Calu3 (cell line): ENCODE measurements at regions of chr20 and their contacts with region 1.

Region 1: GRCh38 chr20:44080646-44081267 is 106.2 kb downstream of the JPH2 start:
- DNase-seq: peak; percentile 86
- H3K4me3 Mint-ChIP-seq: no peak overlapping the region
- H3K27ac Mint-ChIP-seq: no peak overlapping the region
- H3K4me1 Mint-ChIP-seq: peaks cover 7% of the 10 kb centered on the region
- H3K27me3 Mint-ChIP-seq: peaks cover 41% of the 10 kb centered on the region
- CTCF ChIP-seq: peak; percentile 98

Region 2: DNA sequence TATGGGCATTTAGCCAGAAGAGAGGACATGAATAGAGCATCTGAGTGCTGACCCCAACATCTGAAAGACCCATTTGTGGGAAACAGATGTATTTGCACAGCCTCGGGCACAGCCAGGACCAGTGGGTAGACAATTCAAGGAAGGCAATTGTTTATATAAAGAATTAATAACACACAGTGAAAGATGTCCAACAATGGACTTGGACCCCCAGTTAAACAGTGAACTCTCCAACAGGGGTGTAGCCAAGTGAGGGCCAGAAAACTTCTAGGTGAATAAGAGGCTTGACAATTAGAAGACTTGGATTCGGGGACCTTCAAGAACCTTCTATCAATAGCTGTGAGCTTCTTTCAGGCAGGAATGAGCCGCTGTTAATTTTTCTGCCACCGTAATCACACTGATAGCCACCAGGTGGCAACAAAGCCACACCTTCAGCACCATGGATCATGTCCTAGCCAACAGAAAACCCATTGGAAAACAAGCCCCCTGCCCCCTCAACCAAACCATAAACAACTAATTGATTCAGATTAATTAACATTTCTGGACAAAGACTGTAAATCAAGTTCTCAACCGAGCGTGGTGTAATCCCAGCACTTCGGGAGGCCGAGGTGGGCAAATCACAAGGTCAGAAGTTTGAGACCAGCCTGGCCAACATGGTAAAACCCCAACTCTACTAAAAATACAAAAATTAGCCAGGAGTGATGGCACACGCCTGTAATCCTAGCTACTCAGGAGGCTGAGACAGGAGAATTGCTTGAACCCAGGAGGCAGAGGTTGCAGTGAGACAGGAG is 631.8 kb before region 1 on chr20:
- CTCF ChIA-PET with region 1: no interaction called
- intact Hi-C with region 1: loop called (anchors 2 kb)
- DNase-seq: peak; percentile 62
- H3K4me3 Mint-ChIP-seq: no peak overlapping the region
- H3K27ac Mint-ChIP-seq: no peak overlapping the region
- H3K4me1 Mint-ChIP-seq: peaks cover 8% of the 10 kb centered on the region
- H3K27me3 Mint-ChIP-seq: peaks cover 68% of the 10 kb centered on the region
- CTCF ChIP-seq: peak; percentile 92

Region 3: DNA sequence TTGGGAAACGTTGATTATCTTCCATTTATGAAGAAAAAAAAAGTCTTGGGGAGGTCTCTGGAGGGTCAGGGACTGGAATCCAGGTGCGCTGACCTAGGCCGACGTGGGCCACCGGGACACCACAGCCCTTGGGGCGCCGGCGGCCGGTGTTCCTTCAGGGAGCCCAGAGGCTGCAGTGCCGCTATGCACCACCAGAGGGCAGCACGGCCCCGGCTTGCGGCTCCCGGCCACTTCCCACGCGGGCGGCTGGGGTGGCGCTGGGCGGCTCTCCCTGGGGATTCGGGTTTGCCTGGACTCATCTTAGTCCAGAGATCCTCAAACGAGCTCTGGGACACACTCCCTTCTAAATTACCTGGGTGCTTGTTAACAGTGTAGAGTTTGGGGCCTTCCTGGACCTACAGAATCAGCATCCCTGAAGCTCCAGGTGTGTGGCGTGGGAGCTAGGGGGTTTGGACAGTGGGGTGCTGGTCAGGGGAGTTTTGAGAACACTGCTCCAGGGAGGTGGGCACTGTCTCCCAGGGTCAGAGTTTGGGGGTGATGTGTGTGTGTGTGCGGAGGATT is 330.9 kb before region 1 on chr20:
- CTCF ChIA-PET with region 1: interaction called, 15 read pairs
- intact Hi-C with region 1: loop called (anchors 1 kb)
- DNase-seq: peak; percentile 97
- H3K4me3 Mint-ChIP-seq: no peak overlapping the region
- H3K27ac Mint-ChIP-seq: no peak overlapping the region
- H3K4me1 Mint-ChIP-seq: peaks cover 10% of the 10 kb centered on the region
- H3K27me3 Mint-ChIP-seq: peaks cover 62% of the 10 kb centered on the region
- CTCF ChIP-seq: peak; percentile 100

Region 4: DNA sequence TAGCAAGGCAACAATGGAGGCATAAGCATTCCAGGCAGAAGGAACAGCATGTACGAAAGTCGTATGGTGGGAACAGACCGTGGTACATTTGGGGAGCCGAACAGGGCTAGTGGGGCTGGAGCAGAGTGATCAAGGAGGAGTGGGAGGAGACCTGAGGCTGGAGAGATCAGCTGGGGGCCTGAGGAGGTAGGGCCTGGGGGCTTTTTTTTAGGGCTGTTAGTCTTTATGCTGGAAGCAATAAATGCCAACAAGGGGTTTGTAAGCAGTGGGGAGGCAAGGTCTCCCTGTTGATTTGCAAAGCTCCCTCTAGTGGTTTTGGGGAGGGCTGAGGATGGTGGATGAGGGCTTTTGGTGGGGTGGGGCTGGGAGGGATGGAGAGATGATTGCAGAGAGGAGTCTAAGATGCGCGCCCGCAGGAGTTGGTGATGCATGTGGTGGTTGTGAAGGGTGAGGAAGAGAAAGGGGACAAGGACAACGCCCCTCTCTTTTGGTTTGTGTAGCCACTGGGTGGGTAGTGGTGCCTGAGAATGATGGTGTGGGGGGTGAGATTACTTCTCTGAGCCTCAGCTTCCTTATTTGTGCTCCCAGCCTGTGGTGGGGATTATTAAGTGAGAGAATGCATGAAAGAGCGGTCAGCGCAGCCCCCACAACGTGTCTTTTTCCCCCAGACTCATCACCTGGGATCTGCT is 240.2 kb before region 1 on chr20:
- CTCF ChIA-PET with region 1: interaction called, 4 read pairs
- intact Hi-C with region 1: loop called (anchors 10 kb)
- DNase-seq: peak; percentile 42
- H3K4me3 Mint-ChIP-seq: no peak overlapping the region
- H3K27ac Mint-ChIP-seq: no peak overlapping the region
- H3K4me1 Mint-ChIP-seq: no peaks in the 10 kb centered on the region
- H3K27me3 Mint-ChIP-seq: peaks cover 88% of the 10 kb centered on the region
- CTCF ChIP-seq: peak; percentile 67

Region 5: GRCh38 chr20:44056010-44056698 is 24.6 kb before region 1 on chr20:
- CTCF ChIA-PET with region 1: interaction called, 3 read pairs
- intact Hi-C with region 1: loop called (anchors 1 kb)
- DNase-seq: peak; percentile 75
- H3K4me3 Mint-ChIP-seq: no peak overlapping the region
- H3K27ac Mint-ChIP-seq: no peak overlapping the region
- H3K4me1 Mint-ChIP-seq: no peaks in the 10 kb centered on the region
- H3K27me3 Mint-ChIP-seq: peaks cover 88% of the 10 kb centered on the region
- CTCF ChIP-seq: peak; percentile 83